ENCODE measurements at regions of chr1 and their contacts with region 1.

Region 1: DNA sequence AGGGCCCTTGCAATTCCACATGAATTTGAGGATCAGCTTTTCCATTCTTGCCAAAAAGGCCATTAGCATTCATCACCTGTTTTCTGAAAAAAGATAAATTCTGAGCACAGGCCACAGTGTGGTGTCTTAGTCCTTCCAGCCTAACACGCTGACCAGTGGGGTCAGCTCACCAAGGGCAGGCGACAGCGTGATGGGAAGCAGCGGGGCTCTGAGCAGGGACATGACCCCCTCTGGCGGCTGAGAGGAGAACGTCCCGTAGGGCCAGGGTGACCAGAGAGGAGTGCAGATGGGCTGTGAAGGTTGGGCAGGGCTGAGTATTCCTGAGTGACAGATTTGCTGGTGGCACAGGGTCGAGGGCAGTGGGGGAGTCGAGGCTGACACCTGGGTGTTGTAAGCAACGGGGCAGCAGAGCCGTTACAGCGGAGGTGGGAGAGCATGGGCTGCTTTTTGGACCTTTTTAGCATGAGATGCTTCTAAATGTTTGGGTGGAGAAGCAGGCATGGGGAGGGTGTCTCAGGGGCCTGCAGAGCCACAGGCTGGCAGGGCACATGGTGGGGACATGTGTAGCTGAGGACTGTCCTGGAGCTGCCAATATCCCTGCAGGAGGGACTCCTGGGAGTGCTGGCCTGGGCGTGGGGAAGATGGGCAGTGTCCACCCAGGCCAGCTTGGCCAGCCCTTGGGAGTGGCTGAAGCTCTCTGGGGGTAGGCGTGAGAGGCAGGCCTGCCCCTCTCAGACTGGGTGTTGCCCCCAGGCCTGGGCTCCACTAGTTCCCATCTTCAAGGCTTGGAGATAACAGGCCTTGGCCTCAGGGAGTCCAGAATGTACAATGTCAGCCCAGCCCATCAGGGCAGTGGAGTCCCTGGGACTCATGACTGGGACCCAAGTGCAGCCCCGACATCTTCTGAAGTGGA is 8.6 kb upstream of the CALML6 start:
- DNase-seq: peak; percentile 87 to 88
- ATAC-seq: peak; percentile 60 to 85 (median 76)
- H3K4me3 ChIP-seq: no peak overlapping the region
- H3K27ac ChIP-seq: peak overlapping the region in 8 of 10 donors; percentile 18 to 74 (median 64)
- H3K4me1 ChIP-seq: peaks cover 4 to 38% (median 24%) of the 10 kb centered on the region in 9 donors
- H3K27me3 ChIP-seq: no peaks in the 10 kb centered on the region
- CTCF ChIP-seq: peak; percentile 90 to 96 (median 93)

Region 2: GRCh38 chr1:1758692-1759455 is 147.6 kb before region 1 on chr1:
- intact Hi-C with region 1: loop called in 1 of 10 experiments (anchors 5 kb)
- DNase-seq: peak; percentile 51 to 67
- ATAC-seq: peak; percentile 50 to 89 (median 72)
- H3K4me3 ChIP-seq: no peak overlapping the region
- H3K27ac ChIP-seq: peak overlapping the region in 9 of 10 donors; percentile 21 to 68 (median 46)
- H3K4me1 ChIP-seq: peaks cover 0 to 27% (median 17%) of the 10 kb centered on the region in 9 donors
- H3K27me3 ChIP-seq: no peaks in the 10 kb centered on the region
- CTCF ChIP-seq: no peak

Region 3: GRCh38 chr1:1833916-1834325 is 72.5 kb before region 1 on chr1:
- intact Hi-C with region 1: no loop called
- DNase-seq: no peak
- ATAC-seq: peak in 5 of 8 donors; percentile 15 to 52 (median 39)
- H3K4me3 ChIP-seq: no peak overlapping the region
- H3K27ac ChIP-seq: peak overlapping the region in 3 of 10 donors; percentile 1 to 45 (median 39)
- H3K4me1 ChIP-seq: peaks cover 11 to 47% (median 28%) of the 10 kb centered on the region in 9 donors
- H3K27me3 ChIP-seq: no peaks in the 10 kb centered on the region
- CTCF ChIP-seq: no peak

Region 4: DNA sequence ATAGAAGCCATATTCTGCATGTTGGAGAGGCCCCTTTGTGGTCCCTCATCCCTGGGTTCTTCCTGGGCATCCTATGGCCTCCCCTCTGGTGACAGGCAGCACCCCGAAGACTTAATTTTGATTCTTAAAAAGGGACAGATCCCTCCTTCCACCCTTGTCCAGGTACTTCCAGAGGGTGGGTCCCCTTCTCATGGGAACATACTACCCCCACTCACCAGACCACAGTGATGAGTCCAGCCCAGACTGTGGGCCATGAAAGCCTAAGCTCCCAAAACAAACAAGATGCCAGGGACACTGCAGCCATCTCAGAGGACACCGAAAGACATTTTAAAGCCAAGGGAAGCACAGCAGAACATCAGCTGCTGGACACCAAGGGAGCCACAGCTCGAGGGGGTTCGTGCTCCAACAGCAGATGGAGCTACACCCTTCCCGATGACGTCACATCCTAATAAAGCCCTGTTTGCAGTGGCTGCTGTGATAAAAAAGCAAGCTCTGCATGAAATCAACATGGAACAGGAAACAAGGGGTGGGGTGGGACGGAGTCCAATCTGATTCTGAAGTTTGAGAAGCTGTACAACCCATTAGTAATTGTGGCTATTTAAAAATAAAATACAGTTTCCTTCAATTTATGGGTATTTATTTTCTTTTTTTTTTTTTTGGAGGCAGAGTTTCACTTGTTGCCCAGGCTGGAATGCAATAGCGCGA is 47.9 kb before region 1 on chr1:
- intact Hi-C with region 1: loop called in 3 of 10 experiments (anchors 2 to 5 kb)
- DNase-seq: peak; percentile 67 to 95
- ATAC-seq: peak; percentile 87 to 94 (median 90)
- H3K4me3 ChIP-seq: peak overlapping the region in 7 of 10 donors; percentile 19 to 48 (median 34)
- H3K27ac ChIP-seq: peak overlapping the region; percentile 73 to 87 (median 82)
- H3K4me1 ChIP-seq: peaks cover 32 to 96% (median 83%) of the 10 kb centered on the region in 9 donors
- H3K27me3 ChIP-seq: no peaks in the 10 kb centered on the region
- CTCF ChIP-seq: peak in 7 of 9 donors; percentile 40 to 82 (median 54)